PC-9 (cell line): ENCODE measurements at regions of chr2 and their contacts with region 1.

Region 1: GRCh38 chr2:36650031-36650430 is 46.5 kb upstream of the VIT start:
- DNase-seq: peak; percentile 65 to 94
- H3K4me3 ChIP-seq: peak overlapping the region; percentile 36; the same call in 1 of the 2 replicates
- H3K27ac ChIP-seq: peak overlapping the region; percentile 74
- H3K4me1 ChIP-seq: peaks cover 23% of the 10 kb centered on the region
- H3K27me3 ChIP-seq: no peaks in the 10 kb centered on the region
- CTCF ChIP-seq: no peak

Region 2: GRCh38 chr2:36597532-36598377 is 52.3 kb before region 1 on chr2 and contains the start of gene FEZ2:
- CTCF ChIA-PET with region 1: no interaction called
- POLR2A ChIA-PET with region 1: no interaction called
- intact Hi-C with region 1: loop called (anchors 1 kb)
- DNase-seq: peak; percentile 72 to 79
- H3K4me3 ChIP-seq: peak within 1 kb of the TSS; percentile 65
- H3K27ac ChIP-seq: peak within 1 kb of the TSS; percentile 53; the same call in 1 of the 2 replicates
- H3K4me1 ChIP-seq: peaks cover 22% of the 10 kb centered on the region
- H3K27me3 ChIP-seq: no peaks in the 10 kb centered on the region
- CTCF ChIP-seq: no peak
- total RNA-seq, gene FEZ2: 33.9 and 36.1 TPM in 2 replicates

Region 3: GRCh38 chr2:36680012-36680411 is 30.0 kb after region 1 on chr2:
- CTCF ChIA-PET with region 1: no interaction called
- POLR2A ChIA-PET with region 1: no interaction called
- intact Hi-C with region 1: no loop called
- DNase-seq: no peak
- H3K4me3 ChIP-seq: no peak overlapping the region
- H3K27ac ChIP-seq: no peak overlapping the region
- H3K4me1 ChIP-seq: no peaks in the 10 kb centered on the region
- H3K27me3 ChIP-seq: no peaks in the 10 kb centered on the region
- CTCF ChIP-seq: no peak